ENCODE measurements at regions of chr2 and their contacts with region 1.

Region 1: GRCh38 chr2:181586569-181587081 is 70.3 kb downstream of the CERKL start:
- DNase-seq: no peak
- ATAC-seq: no peak

Region 2: DNA sequence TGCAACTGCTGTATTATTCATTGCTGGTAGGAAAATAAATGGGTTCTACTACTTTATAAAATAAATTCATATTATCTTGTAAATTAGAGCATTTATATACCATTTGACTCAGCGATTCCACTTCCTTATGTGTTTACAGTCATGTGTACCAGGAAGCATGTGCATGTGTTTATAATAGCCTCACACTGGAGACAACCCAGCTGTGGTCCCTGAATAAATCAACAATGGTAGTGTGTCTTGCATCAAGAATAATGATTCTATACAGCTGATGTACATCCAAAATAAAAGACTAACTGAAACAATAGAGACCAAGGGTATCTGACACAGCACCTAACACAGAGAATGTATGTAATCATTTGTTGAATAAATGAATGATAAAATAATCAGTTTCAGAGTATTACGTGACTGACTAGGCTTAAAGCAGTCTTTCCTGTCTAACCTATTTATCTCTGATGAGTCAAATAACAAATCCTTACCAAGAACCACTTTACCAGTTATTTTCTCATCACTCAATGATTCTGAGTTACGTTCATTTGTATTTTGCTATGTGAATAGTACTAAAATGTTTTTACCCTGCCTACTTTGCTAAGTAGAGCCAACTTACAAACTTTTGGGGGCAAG is 389.4 kb before region 1 on chr2:
- intact Hi-C with region 1: no loop called
- DNase-seq: no peak
- ATAC-seq: no peak

Region 3: GRCh38 chr2:181715033-181715630 is 128.5 kb after region 1 on chr2:
- intact Hi-C with region 1: loop called (anchors 10 kb)
- DNase-seq: peak; percentile 50
- ATAC-seq: peak; percentile 57

Measured in left ventricle myocardium superior (tissue), 1 donor.